ENCODE measurements at regions of chr16 and their contacts with region 1.

Region 1: GRCh38 chr16:46673320-46674013 is 15.5 kb downstream of the VPS35 start:
- H3K4me3 ChIP-seq: no peak overlapping the region
- H3K27ac ChIP-seq: no peak overlapping the region
- H3K4me1 ChIP-seq: no peaks in the 10 kb centered on the region
- CTCF ChIP-seq: peak; percentile 65

Region 2: DNA sequence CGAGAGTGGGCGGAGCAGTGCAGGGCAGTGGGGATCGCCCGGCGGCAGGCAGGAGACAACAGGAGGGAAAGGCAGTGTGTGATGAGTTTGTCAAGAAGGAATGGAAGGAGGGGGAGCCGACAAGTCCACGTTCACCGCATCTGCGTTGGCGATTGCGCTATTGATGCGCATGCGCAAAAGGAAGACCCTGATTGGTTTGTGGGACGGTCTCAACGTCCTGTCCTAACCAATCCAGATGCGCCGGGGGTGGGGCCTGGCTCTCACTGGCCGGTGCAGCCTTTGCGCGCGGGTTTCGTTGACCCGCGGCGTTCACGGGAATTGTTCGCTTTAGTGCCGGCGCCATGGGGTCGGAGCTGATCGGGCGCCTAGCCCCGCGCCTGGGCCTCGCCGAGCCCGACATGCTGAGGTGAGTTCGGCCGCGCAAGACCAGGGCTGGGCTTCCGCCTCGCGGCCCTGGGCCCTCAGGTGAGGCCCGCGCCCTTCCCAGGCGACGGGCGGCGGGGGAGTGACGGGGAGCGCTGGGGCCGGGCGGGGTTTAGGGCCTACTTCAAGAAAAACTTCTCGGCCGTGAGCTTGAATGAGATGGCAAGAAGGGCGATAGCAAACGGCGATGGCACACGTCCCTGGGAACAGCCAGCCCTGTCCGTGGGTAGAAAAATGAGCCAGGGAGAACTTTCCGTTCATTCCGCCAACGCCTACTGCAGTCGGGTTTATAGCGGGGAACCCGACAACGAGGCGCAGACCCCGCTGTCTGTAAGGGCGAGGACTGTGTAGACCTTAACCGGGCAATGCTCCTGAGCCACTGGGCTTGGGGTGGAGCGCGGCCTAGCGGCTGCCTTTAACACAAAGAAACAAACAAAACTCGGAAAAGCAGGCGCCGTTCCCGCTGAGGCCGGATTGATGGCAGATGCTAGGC is 16.2 kb after region 1 on chr16 and contains the start of gene ORC6:
- CTCF ChIA-PET with region 1: interaction called, 21 read pairs
- POLR2A ChIA-PET with region 1: interaction called, 4 read pairs
- H3K4me3 ChIP-seq: peak within 1 kb of the TSS; percentile 95
- H3K27ac ChIP-seq: peak within 1 kb of the TSS; percentile 81
- H3K4me1 ChIP-seq: peaks cover 6% of the 10 kb centered on the region; the same call in 1 of the 2 replicates
- CTCF ChIP-seq: peak; percentile 91

Region 3: GRCh38 chr16:46700048-46700447 is 26.6 kb after region 1 on chr16:
- CTCF ChIA-PET with region 1: interaction called, 15 read pairs
- POLR2A ChIA-PET with region 1: no interaction called
- H3K4me3 ChIP-seq: no peak overlapping the region
- H3K27ac ChIP-seq: no peak overlapping the region
- H3K4me1 ChIP-seq: no peaks in the 10 kb centered on the region
- CTCF ChIP-seq: no peak

Region 4: GRCh38 chr16:46801428-46802049 is 128.1 kb after region 1 on chr16:
- CTCF ChIA-PET with region 1: interaction called, 64 read pairs
- POLR2A ChIA-PET with region 1: no interaction called
- H3K4me3 ChIP-seq: no peak overlapping the region
- H3K27ac ChIP-seq: no peak overlapping the region
- H3K4me1 ChIP-seq: no peaks in the 10 kb centered on the region
- CTCF ChIP-seq: no peak

Measured in HEK293 (cell line).